GM18951 (cell line): ENCODE measurements at regions of chr4 and their contacts with region 1.

Region 1: GRCh38 chr4:40149960-40150385 is 46.9 kb upstream of the RHOH start:
- POLR2A ChIP-seq: no peak

Region 2: DNA sequence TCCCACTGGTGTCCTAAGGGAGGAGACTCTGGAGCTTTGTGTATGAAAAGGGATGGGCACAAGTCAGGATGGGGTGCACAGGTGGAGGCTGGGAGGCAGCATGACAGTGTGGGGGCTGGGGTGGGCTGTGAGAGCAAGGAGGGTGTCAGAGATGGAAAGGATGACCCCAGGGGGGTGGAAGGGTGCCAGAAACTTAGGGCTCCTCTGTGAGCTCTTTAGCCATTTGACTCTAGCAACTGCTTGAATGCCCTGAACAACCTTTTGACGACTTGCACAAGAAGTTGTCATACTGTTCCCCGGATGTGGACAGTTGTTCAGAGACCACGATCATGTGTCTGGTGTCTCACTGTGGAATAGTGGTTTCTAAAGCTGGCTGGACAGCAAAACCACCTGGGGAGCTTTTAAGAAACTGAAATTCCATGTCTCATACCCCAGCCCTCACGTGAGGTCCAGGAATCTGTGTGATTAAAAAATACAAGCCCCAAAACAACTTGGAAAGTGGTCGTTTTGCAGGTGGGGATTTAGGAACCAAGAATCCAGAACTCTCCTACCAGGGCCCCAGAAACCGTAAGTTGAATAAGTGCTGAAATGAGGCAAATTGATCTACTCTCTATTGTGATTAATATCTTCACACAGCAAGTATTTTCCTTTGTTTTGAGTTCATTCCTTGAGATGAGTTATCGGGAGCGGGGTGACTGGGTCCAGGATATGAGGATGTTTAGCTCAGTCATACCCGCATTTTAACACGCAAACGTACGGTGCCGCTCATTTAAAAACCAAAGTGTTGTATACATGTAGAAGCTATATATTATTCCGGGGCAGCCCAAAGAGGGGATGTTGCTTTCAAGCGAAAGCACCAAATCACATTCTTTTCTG is 50.3 kb after region 1 on chr4:
- in situ Hi-C with region 1: loop called (anchors 5 kb)
- POLR2A ChIP-seq: peak; percentile 62

Region 3: DNA sequence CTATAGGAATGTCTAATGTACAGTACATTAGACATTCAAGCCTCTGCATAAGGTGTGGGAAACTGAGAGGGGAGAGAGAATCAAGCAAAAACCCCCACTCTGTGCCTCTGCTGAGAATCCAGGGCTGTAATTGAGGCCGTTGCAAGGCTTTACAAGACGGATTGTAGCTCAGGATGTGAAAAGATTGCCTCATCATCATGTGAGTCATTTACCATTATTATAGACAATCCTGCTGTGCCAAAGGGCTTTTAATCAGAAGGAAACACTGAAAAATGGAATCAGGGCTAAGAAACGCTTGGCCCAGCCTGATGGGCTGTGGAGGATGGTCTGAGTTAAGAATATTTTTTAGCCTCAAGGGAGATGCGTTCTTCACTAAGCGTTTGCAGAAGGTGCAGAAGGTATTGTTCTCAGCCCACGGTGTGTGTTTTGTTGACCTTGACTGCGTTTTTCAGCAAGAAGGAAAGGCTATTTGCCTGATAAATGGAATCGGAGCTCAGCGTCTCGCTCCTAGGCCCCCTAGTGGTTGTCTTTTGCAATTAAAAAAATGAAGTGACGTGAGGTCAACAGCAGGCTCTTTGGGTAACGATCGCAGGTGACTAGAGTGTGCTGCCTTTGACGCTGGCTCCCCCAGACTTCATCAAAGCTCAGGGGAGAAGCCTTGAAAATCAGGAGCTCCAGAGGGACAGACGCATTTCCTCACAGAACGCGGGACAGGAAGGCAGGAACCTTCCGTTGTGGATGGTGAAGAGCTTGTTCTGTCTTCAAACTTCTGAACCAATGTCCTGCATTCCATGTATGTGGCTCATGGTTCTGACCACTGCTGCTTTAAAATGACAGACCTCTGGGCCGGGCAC is 167.0 kb after region 1 on chr4:
- in situ Hi-C with region 1: loop called (anchors 10 kb)
- POLR2A ChIP-seq: no peak